Activated CD8-positive, alpha-beta T cell treated with anti-CD3 and anti-CD28 coated beads for 36 hours (primary cell): ENCODE measurements at regions of chr11 and their contacts with region 1.

Region 1: GRCh38 chr11:59802639-59803176 is 7.9 kb downstream of the MRPL16 start:
- DNase-seq: peak; percentile 54
- ATAC-seq: peak; percentile 69
- H3K4me3 Mint-ChIP-seq: no peak overlapping the region
- H3K27ac Mint-ChIP-seq: no peak overlapping the region
- H3K4me1 Mint-ChIP-seq: no peaks in the 10 kb centered on the region
- H3K27me3 Mint-ChIP-seq: no peaks in the 10 kb centered on the region
- CTCF ChIP-seq: peak; percentile 73

Region 2: GRCh38 chr11:59368238-59369022 is 434.3 kb before region 1 on chr11:
- CTCF ChIA-PET with region 1: no interaction called
- POLR2A ChIA-PET with region 1: no interaction called
- intact Hi-C with region 1: no loop called
- DNase-seq: no peak
- ATAC-seq: no peak
- H3K4me3 Mint-ChIP-seq: no peak overlapping the region
- H3K27ac Mint-ChIP-seq: no peak overlapping the region
- H3K4me1 Mint-ChIP-seq: no peaks in the 10 kb centered on the region
- H3K27me3 Mint-ChIP-seq: peaks cover 2% of the 10 kb centered on the region
- CTCF ChIP-seq: no peak

Region 3: DNA sequence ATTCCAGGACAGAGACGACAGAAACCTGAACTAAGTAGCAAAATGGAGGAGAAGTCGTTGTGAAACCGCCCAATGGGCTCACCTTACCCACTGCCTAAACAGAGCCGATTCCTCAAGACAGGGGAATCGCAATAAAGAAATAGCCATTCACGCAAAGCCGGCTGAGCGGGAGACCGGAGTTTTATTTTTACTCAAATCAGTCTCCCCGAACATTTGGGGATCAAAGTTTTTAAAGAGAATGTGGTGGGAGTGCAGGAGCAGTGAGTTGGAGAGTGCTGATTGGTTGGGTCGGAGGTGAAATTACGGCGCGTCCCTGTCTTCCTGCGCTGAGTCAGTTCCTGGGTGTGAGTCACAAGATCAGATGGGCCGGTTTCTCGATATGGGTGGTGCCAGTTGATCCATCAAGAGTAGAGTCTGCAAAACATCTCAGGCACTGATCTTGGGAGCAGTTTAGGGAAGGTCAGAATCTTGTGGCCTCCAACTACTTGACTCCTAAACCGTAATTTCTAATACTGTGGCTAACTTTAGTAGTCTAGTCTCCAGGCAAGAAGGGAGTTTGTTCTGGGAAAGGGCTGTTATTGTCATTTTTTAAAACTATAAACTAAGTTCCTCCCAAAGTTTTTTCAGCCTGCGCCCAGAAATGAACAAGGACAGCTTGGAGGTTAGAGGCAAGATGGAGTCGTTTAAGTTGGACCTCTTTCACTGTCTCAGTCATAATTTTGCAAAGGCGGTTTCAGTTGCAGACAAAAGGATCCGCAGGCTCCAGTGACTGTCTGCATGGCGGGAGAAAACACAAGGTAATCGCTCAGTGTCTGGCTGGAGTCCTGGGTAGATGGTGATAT is 257.3 kb before region 1 on chr11:
- CTCF ChIA-PET with region 1: no interaction called
- POLR2A ChIA-PET with region 1: no interaction called
- intact Hi-C with region 1: loop called (anchors 10 kb)
- DNase-seq: no peak
- ATAC-seq: no peak
- H3K4me3 Mint-ChIP-seq: no peak overlapping the region
- H3K27ac Mint-ChIP-seq: no peak overlapping the region
- H3K4me1 Mint-ChIP-seq: peaks cover 12% of the 10 kb centered on the region
- H3K27me3 Mint-ChIP-seq: no peaks in the 10 kb centered on the region
- CTCF ChIP-seq: no peak

Region 4: GRCh38 chr11:59668950-59669610 is 133.6 kb before region 1 on chr11 and contains the start of gene PATL1:
- CTCF ChIA-PET with region 1: no interaction called
- POLR2A ChIA-PET with region 1: interaction called, 3 read pairs
- intact Hi-C with region 1: loop called (anchors 10 kb)
- DNase-seq: peak; percentile 99
- ATAC-seq: peak; percentile 94
- H3K4me3 Mint-ChIP-seq: peak within 1 kb of the TSS; percentile 88
- H3K27ac Mint-ChIP-seq: peak within 1 kb of the TSS; percentile 96
- H3K4me1 Mint-ChIP-seq: peaks cover 38% of the 10 kb centered on the region
- H3K27me3 Mint-ChIP-seq: no peaks in the 10 kb centered on the region
- CTCF ChIP-seq: no peak
- total RNA-seq, gene PATL1: 59.5 to 60.6 TPM

Region 5: DNA sequence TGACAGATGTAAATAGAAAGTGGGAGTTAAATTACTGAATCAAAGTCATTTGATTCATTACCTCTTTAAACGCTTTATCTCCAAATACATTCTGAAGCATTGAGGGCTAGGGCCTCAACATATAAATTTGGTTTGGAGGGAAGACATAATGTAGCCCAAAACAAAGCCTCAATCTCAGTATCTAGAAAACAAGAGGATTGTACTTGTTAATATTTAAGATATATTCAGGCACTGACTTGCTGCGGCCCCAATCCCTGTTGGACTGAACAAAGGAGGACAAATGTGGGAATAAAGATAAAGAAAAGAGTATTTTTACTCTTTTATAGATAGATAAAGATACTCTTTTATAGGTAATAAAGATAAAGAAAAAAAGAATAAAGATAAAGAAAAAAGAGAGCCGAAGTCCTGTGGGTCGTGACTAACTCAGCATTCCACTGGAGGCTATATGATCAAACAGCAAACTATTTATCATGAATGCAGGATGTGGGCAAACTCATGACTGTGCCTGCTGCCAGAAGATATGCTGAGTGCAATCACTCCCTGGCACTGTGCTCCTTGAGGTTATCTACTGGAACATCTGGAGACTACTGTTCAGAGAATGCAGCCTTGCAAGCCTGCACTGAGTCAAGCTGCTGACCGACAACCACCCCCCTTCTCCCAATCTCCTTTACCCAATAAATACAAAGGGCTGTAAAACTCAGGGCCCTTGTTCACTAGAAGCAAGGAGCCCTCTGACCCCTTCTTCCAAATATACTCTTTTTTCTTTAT is 96.0 kb before region 1 on chr11:
- CTCF ChIA-PET with region 1: no interaction called
- POLR2A ChIA-PET with region 1: no interaction called
- intact Hi-C with region 1: no loop called
- DNase-seq: no peak
- ATAC-seq: no peak
- H3K4me3 Mint-ChIP-seq: no peak overlapping the region
- H3K27ac Mint-ChIP-seq: no peak overlapping the region
- H3K4me1 Mint-ChIP-seq: no peaks in the 10 kb centered on the region
- H3K27me3 Mint-ChIP-seq: peaks cover 10% of the 10 kb centered on the region
- CTCF ChIP-seq: no peak

Region 6: DNA sequence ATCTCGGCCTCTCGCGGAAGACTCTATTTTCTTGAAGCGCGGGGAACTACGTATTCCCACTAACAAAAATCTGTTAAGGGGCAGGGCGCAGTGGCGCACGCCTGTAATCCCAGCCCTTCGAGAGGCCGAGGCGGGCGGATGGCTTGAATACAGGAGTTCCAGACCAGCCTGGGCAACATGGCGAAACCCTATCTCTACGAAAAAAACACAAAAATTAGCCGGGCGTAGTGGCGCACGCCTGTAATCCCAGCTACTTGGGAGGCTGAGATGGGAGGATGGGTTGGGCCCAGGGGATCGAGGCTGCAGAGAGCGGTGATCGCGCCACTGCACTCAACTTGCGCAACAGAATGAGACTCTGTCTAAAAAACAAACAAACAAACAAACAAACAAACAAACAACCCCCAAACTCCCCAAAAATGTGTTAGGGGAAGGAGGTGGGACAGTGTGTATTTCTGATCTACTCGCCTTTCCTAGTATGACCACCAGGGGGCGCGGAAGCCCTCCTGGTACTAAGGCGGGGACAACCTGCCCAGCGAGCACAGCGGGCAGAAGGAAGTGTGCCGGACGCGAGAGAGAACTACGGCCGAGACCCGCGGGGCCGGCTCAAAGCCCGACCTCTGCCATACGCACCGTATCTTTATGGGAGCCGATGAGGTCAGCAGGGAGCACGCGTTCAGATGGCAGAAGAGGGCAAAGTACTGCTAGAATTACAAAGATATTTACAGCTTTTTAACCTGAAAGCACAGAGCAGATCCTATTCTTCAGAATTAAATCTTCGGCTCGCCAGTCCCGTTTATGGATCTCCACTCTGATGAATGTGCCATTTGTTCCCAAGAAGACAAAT is 48.8 kb before region 1 on chr11:
- CTCF ChIA-PET with region 1: interaction called, 92 read pairs
- POLR2A ChIA-PET with region 1: interaction called, 3 read pairs
- intact Hi-C with region 1: loop called (anchors 1 kb)
- DNase-seq: peak; percentile 92
- ATAC-seq: peak; percentile 71
- H3K4me3 Mint-ChIP-seq: peak overlapping the region; percentile 96
- H3K27ac Mint-ChIP-seq: peak overlapping the region; percentile 55
- H3K4me1 Mint-ChIP-seq: peaks cover 14% of the 10 kb centered on the region
- H3K27me3 Mint-ChIP-seq: peaks cover 8% of the 10 kb centered on the region
- CTCF ChIP-seq: peak; percentile 92

Region 7: DNA sequence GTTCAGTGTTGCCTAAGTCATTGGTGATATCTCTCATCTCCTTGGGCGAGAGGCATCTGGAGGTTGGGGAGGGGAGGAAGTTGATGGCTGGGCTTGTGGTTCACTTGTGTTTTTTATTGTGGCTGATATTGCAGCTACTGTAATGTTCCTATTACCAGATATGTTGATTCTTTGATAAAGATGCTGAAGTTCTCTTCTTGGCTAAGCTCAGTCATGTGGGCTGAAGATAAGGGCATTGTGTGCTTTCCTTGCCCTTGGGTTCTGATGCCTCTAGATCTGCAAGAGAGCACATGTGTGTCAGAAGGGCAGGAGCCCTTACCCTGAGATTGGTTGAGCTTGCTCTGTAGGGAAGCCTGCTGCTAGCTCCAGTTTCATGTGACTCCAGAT is 35.5 kb before region 1 on chr11:
- CTCF ChIA-PET with region 1: interaction called, 10 read pairs
- POLR2A ChIA-PET with region 1: no interaction called
- intact Hi-C with region 1: no loop called
- DNase-seq: peak; percentile 18
- ATAC-seq: peak; percentile 69
- H3K4me3 Mint-ChIP-seq: no peak overlapping the region
- H3K27ac Mint-ChIP-seq: no peak overlapping the region
- H3K4me1 Mint-ChIP-seq: peaks cover 13% of the 10 kb centered on the region
- H3K27me3 Mint-ChIP-seq: no peaks in the 10 kb centered on the region
- CTCF ChIP-seq: no peak

Region 8: GRCh38 chr11:59849129-59849528 is 46.4 kb after region 1 on chr11:
- CTCF ChIA-PET with region 1: no interaction called
- POLR2A ChIA-PET with region 1: no interaction called
- intact Hi-C with region 1: no loop called
- DNase-seq: no peak
- ATAC-seq: no peak
- H3K4me3 Mint-ChIP-seq: no peak overlapping the region
- H3K27ac Mint-ChIP-seq: no peak overlapping the region
- H3K4me1 Mint-ChIP-seq: no peaks in the 10 kb centered on the region
- H3K27me3 Mint-ChIP-seq: no peaks in the 10 kb centered on the region
- CTCF ChIP-seq: no peak